ENCODE measurements at regions of chr7 and their contacts with region 1.

Region 1: GRCh38 chr7:17298207-17298839 is at the start of gene AHR:
- DNase-seq: peak; percentile 89
- H3K4me3 Mint-ChIP-seq: peak within 1 kb of the TSS; percentile 88
- H3K27ac Mint-ChIP-seq: peak within 1 kb of the TSS; percentile 97
- H3K4me1 Mint-ChIP-seq: peaks cover 18% of the 10 kb centered on the region
- H3K27me3 Mint-ChIP-seq: no peaks in the 10 kb centered on the region
- CTCF ChIP-seq: no peak
- total RNA-seq, gene AHR: 99.1 and 100 TPM in 2 replicates

Region 2: DNA sequence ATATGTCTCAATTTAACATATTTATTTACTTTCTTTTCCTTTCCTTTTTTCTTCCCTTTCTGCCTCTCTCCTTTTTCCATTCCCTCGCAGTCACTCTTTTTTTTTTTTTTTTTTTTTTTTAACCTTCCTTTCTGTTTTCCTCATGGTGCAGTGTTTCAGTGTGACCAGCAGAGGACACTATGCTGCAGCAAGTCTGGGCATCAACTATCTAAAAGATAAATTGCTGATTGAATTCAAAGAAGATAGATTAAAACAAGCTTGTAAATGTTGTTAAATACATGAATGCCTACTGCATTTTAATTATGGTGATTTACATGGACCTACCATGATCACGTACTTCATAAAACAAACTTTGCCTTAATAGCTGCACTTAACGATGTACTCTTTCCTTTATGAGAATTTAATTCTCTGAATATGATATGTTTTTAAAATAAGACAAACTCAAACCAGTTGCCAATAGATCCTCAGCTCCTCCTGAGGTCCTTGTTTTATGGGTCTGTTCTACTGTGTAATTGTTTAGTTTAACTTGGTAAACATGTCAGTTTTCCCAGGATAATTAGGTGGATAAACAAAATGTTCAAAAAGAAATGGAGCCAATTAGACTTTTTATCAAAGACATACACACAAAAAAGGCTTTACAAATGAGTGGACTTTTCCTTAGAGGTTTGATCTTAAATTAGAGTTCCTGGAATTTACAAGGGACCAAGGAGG is 315.5 kb before region 1 on chr7:
- CTCF ChIA-PET with region 1: interaction called, 15 read pairs
- POLR2A ChIA-PET with region 1: interaction called, 39 read pairs
- intact Hi-C with region 1: loop called (anchors 1 kb)
- DNase-seq: peak; percentile 57
- H3K4me3 Mint-ChIP-seq: no peak overlapping the region
- H3K27ac Mint-ChIP-seq: no peak overlapping the region
- H3K4me1 Mint-ChIP-seq: peaks cover 26% of the 10 kb centered on the region
- H3K27me3 Mint-ChIP-seq: no peaks in the 10 kb centered on the region
- CTCF ChIP-seq: peak; percentile 79

Region 3: GRCh38 chr7:17063045-17063383 is 235.3 kb before region 1 on chr7:
- CTCF ChIA-PET with region 1: interaction called, 25 read pairs
- POLR2A ChIA-PET with region 1: interaction called, 6 read pairs
- intact Hi-C with region 1: loop called (anchors 1 kb)
- DNase-seq: peak; percentile 23
- H3K4me3 Mint-ChIP-seq: no peak overlapping the region
- H3K27ac Mint-ChIP-seq: no peak overlapping the region
- H3K4me1 Mint-ChIP-seq: no peaks in the 10 kb centered on the region
- H3K27me3 Mint-ChIP-seq: no peaks in the 10 kb centered on the region
- CTCF ChIP-seq: peak; percentile 26

Region 4: DNA sequence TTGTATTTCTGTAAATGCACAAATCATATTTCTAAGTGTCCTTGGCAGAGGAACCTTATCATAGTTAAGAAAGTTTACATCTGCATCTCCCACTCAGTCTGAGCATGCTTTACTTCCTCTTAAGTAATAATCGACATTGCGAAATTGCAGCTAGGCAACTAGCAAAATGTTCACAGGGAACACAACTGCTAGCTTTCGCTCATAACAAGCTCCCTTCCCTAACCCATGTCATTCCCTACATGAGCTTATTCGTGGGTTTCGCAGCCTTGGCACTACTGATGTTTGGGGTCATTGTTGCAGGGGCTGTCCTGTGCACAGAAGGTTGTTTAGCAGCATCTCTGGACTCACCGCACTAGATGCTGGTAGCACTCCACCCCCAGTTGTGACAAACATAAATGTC is 71.8 kb after region 1 on chr7:
- CTCF ChIA-PET with region 1: interaction called, 11 read pairs
- POLR2A ChIA-PET with region 1: interaction called, 17 read pairs
- intact Hi-C with region 1: no loop called
- DNase-seq: peak; percentile 94
- H3K4me3 Mint-ChIP-seq: peak overlapping the region; percentile 9
- H3K27ac Mint-ChIP-seq: peak overlapping the region; percentile 89
- H3K4me1 Mint-ChIP-seq: peaks cover 27% of the 10 kb centered on the region
- H3K27me3 Mint-ChIP-seq: no peaks in the 10 kb centered on the region
- CTCF ChIP-seq: no peak

Region 5: DNA sequence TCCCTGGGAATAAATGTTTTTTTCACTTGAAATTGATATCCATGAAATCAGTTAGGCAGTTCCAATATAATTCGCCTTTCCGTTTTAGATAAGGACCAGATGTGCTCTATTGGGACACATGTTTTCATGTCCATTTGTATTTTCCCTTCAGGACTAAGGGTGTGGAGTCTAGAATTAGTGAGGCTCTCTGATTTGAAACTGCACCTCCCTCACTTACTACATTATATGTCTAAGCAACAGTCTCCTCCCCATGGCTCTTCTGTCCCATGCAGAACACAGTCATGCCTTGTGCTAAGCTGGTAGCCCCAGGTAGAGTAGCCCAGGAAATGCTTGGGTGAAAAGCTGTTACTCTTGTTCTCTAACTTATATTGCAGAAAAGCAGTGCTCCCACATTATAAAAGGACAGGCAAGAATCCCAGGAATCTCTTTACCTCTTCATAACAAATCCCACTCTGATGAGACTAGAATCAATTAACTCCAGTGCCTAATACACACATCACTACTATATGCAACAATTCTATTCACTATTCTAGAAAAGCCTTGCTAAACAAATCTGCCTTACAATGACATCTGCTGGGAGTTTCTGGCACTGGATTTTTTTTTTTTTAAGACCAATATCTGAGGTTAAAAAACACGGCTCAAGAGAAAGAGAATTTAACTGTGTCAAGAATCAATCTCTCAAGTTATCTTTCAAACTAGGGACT is 348.1 kb after region 1 on chr7:
- CTCF ChIA-PET with region 1: interaction called, 23 read pairs
- POLR2A ChIA-PET with region 1: interaction called, 13 read pairs
- intact Hi-C with region 1: loop called (anchors 1 kb)
- DNase-seq: peak; percentile 43
- H3K4me3 Mint-ChIP-seq: no peak overlapping the region
- H3K27ac Mint-ChIP-seq: no peak overlapping the region
- H3K4me1 Mint-ChIP-seq: peaks cover 19% of the 10 kb centered on the region
- H3K27me3 Mint-ChIP-seq: no peaks in the 10 kb centered on the region
- CTCF ChIP-seq: peak; percentile 51

Region 6: GRCh38 chr7:17769918-17770317 is 471.6 kb after region 1 on chr7:
- CTCF ChIA-PET with region 1: no interaction called
- POLR2A ChIA-PET with region 1: no interaction called
- intact Hi-C with region 1: loop called (anchors 5 kb)
- DNase-seq: peak; percentile 76
- H3K4me3 Mint-ChIP-seq: no peak overlapping the region
- H3K27ac Mint-ChIP-seq: no peak overlapping the region
- H3K4me1 Mint-ChIP-seq: peaks cover 35% of the 10 kb centered on the region
- H3K27me3 Mint-ChIP-seq: no peaks in the 10 kb centered on the region
- CTCF ChIP-seq: peak; percentile 77

Region 7: DNA sequence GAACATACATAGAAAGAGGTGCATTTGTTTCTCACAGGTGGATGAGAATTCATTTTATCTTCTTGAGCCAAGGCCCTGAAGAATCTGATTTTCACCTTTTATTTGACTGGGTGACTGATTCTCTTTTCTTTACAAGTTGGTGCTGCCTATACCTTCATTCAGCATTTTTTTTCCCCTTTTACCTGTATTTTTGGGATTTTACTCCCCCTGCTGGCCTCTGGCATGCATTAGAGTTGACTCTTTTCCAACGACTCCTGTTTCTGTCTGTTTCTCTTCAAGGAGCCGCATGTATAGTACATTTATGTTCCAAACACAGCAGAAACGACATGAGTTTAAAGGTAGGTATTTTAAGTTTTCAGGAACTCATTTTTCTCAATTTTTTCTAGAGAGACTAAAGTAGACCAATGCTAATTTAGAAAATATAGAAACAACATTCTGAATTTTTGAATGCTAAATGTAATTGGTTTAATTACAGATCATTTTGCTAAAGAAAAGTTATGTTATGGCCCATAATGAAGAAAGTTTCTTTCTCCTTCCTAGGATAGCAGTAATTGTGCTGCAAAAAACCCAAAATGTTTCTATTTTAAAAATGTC is 1047.4 kb after region 1 on chr7:
- CTCF ChIA-PET with region 1: interaction called, 4 read pairs
- POLR2A ChIA-PET with region 1: no interaction called
- intact Hi-C with region 1: loop called (anchors 5 kb)
- DNase-seq: peak; percentile 78
- H3K4me3 Mint-ChIP-seq: no peak overlapping the region
- H3K27ac Mint-ChIP-seq: no peak overlapping the region
- H3K4me1 Mint-ChIP-seq: no peaks in the 10 kb centered on the region
- H3K27me3 Mint-ChIP-seq: no peaks in the 10 kb centered on the region
- CTCF ChIP-seq: peak; percentile 74